ENCODE measurements at regions of chr17 and their contacts with region 1.

Region 1: DNA sequence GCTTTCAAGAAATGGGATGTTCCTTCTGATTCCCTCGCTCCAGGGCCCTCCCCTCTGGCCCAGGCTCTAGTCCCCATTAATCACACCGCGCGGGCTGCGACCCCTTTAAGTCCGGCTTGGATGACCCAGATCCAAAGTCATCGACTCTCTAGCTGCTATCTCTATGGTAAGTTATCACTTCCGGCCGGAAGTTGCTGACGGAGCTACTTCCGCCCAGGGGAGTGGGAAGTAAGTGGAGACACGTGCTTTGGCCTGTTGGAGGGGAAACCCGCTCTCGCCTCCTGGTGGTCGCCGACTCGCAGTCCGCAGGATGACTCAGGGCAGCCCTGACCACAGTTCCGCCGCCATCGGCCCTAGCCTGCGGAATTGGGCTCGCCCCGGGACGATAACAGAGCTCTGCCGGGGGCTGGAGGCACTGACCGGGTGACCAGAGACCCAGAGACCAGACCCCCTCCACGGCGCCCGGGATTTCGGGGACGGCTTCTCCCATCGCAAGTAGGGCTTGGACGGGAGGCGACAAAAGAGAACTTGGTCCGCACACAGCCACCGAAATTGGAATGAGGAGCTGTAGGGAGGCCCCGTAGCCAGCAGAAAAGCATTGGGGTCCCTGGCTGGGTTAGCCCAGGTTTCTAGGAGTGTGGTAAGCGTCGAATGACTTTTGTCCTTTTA is 52.2 kb upstream of the SEC14L1 start:
- DNase-seq: peak; percentile 99
- ATAC-seq: peak; percentile 96
- H3K4me3 ChIP-seq: peak overlapping the region; percentile 75 to 94 (median 86)
- H3K27ac ChIP-seq: peak overlapping the region; percentile 91
- H3K4me1 ChIP-seq: peaks cover 56% of the 10 kb centered on the region
- H3K27me3 ChIP-seq: no peaks in the 10 kb centered on the region; a peak in 1 of 5 replicates
- CTCF ChIP-seq: peak; percentile 99
- EP300 ChIP-seq: peak in 1 of 2 experiments; percentile 45; a peak in 1 of 4 replicates
- POLR2A ChIP-seq: peak; percentile 79 to 92
- RAD21 ChIP-seq: peak; percentile 88

Region 2: GRCh38 chr17:77101521-77102410 is 13.2 kb after region 1 on chr17:
- CTCF ChIA-PET with region 1: no interaction called
- POLR2A ChIA-PET with region 1: interaction called, 50 read pairs
- in situ Hi-C with region 1: no loop called
- intact Hi-C with region 1: no loop called
- DNase-seq: peak; percentile 88
- ATAC-seq: peak; percentile 89
- H3K4me3 ChIP-seq: peak overlapping the region in 2 of 3 experiments; percentile 19 to 44; a peak in 1 of 6 replicates
- H3K27ac ChIP-seq: peak overlapping the region; percentile 68
- H3K4me1 ChIP-seq: peaks cover 84% of the 10 kb centered on the region
- H3K27me3 ChIP-seq: no peaks in the 10 kb centered on the region
- CTCF ChIP-seq: no peak
- EP300 ChIP-seq: peak in 1 of 2 experiments; percentile 76; a peak in 2 of 4 replicates
- POLR2A ChIP-seq: peak in 1 of 2 experiments; percentile 48; a peak in 1 of 4 replicates
- RAD21 ChIP-seq: no peak

Region 3: DNA sequence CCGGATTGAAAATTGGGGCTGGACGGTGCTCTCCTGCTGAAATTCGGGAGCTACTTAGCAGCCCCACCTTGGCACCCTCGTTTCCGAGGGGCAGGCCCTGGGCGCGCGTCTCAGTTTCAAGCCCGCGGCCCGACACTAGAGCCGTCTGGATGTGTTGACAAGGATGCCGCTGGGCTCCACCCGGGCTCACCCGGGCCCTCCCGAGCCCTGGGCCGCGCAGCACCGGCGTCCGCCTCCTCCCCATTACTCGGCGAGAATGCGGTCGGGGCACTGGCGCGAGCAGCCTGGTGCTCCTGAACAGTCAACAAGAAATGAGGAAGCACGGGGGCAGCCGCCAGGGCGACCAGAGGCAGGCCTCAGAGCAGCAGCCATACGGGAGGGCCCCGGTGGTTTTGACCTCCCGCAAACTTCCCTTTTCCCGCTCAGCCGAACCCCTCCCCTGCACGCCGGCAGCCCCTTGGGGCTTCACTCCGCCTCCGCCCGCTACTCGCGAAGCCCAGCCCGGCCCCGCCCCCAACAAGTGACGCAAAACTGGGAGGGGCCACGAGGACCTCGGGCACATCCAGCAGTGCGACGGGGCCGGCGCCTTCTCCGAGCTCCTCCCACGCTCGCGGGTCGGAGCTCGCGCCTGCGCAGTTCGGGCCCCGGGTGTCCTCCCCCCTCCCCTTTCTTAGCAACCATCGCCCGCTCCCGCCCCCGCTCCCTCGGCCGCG is 51.7 kb after region 1 on chr17:
- CTCF ChIA-PET with region 1: no interaction called
- POLR2A ChIA-PET with region 1: interaction called, 35 read pairs
- in situ Hi-C with region 1: no loop called
- intact Hi-C with region 1: no loop called
- DNase-seq: peak; percentile 96
- ATAC-seq: peak; percentile 91
- H3K4me3 ChIP-seq: peak overlapping the region; percentile 50 to 84 (median 78)
- H3K27ac ChIP-seq: peak overlapping the region; percentile 89
- H3K4me1 ChIP-seq: peaks cover 57% of the 10 kb centered on the region
- H3K27me3 ChIP-seq: no peaks in the 10 kb centered on the region; a peak in 1 of 5 replicates
- CTCF ChIP-seq: no peak
- EP300 ChIP-seq: peak; percentile 33 to 45; a peak in 2 of 4 replicates
- POLR2A ChIP-seq: peak; percentile 92 to 96
- RAD21 ChIP-seq: peak; percentile 76

Region 4: GRCh38 chr17:77167472-77168306 is 79.1 kb after region 1 on chr17:
- CTCF ChIA-PET with region 1: no interaction called
- POLR2A ChIA-PET with region 1: no interaction called
- in situ Hi-C with region 1: no loop called
- intact Hi-C with region 1: no loop called
- DNase-seq: no peak
- ATAC-seq: no peak
- H3K4me3 ChIP-seq: no peak overlapping the region
- H3K27ac ChIP-seq: no peak overlapping the region
- H3K4me1 ChIP-seq: peaks cover 37% of the 10 kb centered on the region
- H3K27me3 ChIP-seq: no peaks in the 10 kb centered on the region
- CTCF ChIP-seq: no peak
- EP300 ChIP-seq: no peak
- POLR2A ChIP-seq: no peak
- RAD21 ChIP-seq: no peak

Region 5: GRCh38 chr17:77208217-77208808 is 119.7 kb after region 1 on chr17:
- CTCF ChIA-PET with region 1: interaction called, 18 read pairs
- POLR2A ChIA-PET with region 1: interaction called, 25 read pairs
- in situ Hi-C with region 1: no loop called
- intact Hi-C with region 1: loop called (anchors 1 kb)
- DNase-seq: peak; percentile 87
- ATAC-seq: peak; percentile 90
- H3K4me3 ChIP-seq: peak overlapping the region in 1 of 3 experiments; percentile 27; a peak in 1 of 6 replicates
- H3K27ac ChIP-seq: peak overlapping the region; percentile 73
- H3K4me1 ChIP-seq: peaks cover 37% of the 10 kb centered on the region
- H3K27me3 ChIP-seq: no peaks in the 10 kb centered on the region
- CTCF ChIP-seq: peak; percentile 90
- EP300 ChIP-seq: peak in 1 of 2 experiments; percentile 83; a peak in 2 of 4 replicates
- POLR2A ChIP-seq: no peak; a peak in 1 of 4 replicates
- RAD21 ChIP-seq: peak; percentile 77

Region 6: GRCh38 chr17:77247048-77247541 is 158.5 kb after region 1 on chr17:
- CTCF ChIA-PET with region 1: interaction called, 73 read pairs
- POLR2A ChIA-PET with region 1: interaction called, 3 read pairs
- in situ Hi-C with region 1: loop called (anchors 5 kb)
- intact Hi-C with region 1: loop called (anchors 1 kb)
- DNase-seq: peak; percentile 67
- ATAC-seq: peak; percentile 93
- H3K4me3 ChIP-seq: peak overlapping the region; percentile 54 to 81 (median 59); a peak in 5 of 6 replicates
- H3K27ac ChIP-seq: no peak overlapping the region
- H3K4me1 ChIP-seq: peaks cover 19% of the 10 kb centered on the region
- H3K27me3 ChIP-seq: peaks cover 17 to 58% of the 10 kb centered on the region in 2 experiments
- CTCF ChIP-seq: peak; percentile 98
- EP300 ChIP-seq: no peak
- POLR2A ChIP-seq: no peak
- RAD21 ChIP-seq: peak; percentile 99

Measured in HepG2 (cell line).